ENCODE measurements at regions of chr21 and their contacts with region 1.

Region 1: GRCh38 chr21:42878993-42879787 is at the start of gene WDR4:
- DNase-seq: peak; percentile 99
- H3K4me3 Mint-ChIP-seq: peak within 1 kb of the TSS; percentile 91
- H3K27ac Mint-ChIP-seq: peak within 1 kb of the TSS; percentile 92
- H3K4me1 Mint-ChIP-seq: peaks cover 14% of the 10 kb centered on the region
- H3K27me3 Mint-ChIP-seq: no peaks in the 10 kb centered on the region
- total RNA-seq, gene WDR4: 62.2 and 65.6 TPM in 2 replicates

Region 2: DNA sequence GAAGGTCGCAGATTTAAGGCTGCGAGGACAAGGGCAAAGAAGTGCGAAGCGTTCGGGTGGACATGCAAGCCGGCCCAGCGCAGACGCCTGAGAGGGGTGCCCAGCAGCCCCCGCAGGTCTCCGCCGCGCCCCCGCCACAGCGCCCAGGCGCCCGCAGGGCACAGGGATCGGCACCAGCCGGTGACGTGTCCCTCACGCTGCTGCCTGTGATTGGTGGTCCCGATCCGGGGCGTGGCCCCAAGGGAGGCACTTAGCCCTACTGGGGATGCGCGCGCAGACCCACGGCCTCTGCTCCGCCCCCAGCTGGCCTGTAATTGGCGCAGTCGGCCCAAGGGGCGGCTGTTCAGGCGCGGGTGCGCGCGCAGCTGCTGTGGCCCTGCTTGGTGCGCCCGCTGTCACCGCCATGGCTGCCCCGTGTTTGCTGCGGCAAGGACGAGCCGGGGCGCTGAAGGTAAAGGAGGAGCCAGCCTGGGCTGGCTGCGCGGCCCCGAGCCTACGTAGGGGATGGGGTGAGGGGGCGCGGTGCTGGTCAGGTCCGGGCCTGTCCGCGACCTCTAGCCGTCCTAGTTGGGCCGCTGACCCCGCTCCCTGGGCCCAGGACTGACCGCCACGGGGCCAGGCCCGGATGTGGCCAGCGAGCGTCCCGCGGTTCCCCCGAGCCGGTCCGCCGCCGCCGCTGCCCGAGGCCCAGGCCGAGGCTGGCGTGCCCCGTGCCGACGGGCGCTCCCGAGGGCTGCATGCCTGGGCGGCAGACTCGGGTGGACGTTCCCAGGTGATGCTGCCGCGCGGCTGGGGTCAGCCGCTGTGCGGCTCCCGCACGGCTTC is 14.0 kb after region 1 on chr21 and contains the start of gene NDUFV3:
- intact Hi-C with region 1: loop called (anchors 1 kb)
- DNase-seq: peak; percentile 98
- H3K4me3 Mint-ChIP-seq: peak within 1 kb of the TSS; percentile 85
- H3K27ac Mint-ChIP-seq: peak within 1 kb of the TSS; percentile 95
- H3K4me1 Mint-ChIP-seq: peaks cover 11% of the 10 kb centered on the region
- H3K27me3 Mint-ChIP-seq: no peaks in the 10 kb centered on the region
- total RNA-seq, gene NDUFV3: 39.6 and 45.9 TPM in 2 replicates

Region 3: GRCh38 chr21:42939582-42940410 is 60.6 kb after region 1 on chr21:
- intact Hi-C with region 1: no loop called
- DNase-seq: no peak
- H3K4me3 Mint-ChIP-seq: no peak overlapping the region
- H3K27ac Mint-ChIP-seq: no peak overlapping the region
- H3K4me1 Mint-ChIP-seq: no peaks in the 10 kb centered on the region
- H3K27me3 Mint-ChIP-seq: no peaks in the 10 kb centered on the region

Region 4: DNA sequence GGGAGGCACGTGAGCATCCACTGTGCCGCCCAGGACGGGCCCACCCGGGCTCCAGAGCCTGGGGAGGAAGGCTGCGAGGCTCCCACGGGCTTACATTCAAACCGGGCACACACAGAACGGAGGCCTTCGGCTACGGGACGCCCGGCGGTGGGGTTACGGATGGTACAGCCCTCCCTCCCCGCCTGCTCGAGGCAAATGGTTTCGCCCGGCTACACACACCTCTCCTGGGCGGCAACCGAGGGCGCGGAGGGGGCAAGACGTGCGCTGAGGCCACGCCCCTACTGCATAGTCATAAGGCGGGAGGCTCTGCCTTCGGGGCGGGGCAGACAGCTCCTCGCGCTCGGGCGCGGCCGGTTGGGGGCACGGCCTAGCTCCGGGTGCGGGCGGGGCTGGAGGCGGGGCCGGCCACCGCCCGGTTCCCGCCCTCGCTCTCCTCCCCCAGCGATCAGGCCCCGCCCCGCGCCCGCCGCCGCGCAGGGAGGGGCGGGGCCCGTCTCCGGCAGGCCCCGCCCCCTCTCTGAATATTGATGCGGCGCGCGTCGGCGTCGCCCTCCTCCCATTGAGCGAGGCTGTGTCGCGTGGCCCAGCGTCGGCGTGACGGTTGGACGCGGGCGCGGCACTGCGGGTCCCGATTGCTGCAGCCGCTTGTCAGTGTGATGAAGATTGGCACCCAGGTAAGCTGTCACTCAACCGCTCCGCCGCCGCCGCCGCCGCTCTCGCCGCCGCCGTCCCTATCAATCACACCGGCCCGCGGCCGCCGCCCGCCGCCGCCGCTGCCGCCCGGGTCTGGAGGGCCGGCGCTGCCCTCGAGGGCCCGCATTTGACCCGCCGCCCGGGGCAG is 95.0 kb after region 1 on chr21 and contains the start of gene PKNOX1:
- intact Hi-C with region 1: loop called (anchors 1 kb)
- DNase-seq: peak; percentile 98
- H3K4me3 Mint-ChIP-seq: peak within 1 kb of the TSS; percentile 87
- H3K27ac Mint-ChIP-seq: peak within 1 kb of the TSS; percentile 90
- H3K4me1 Mint-ChIP-seq: peaks cover 25% of the 10 kb centered on the region
- H3K27me3 Mint-ChIP-seq: no peaks in the 10 kb centered on the region
- total RNA-seq, gene PKNOX1: 25.6 and 26.9 TPM in 2 replicates

Measured in activated T-helper 2 cell treated with anti-CD3 and anti-CD28 coated beads, Interferon-gamma antibody, Interleukin-2, Interleukin-4, amounts not matched to agents 10 μg/mL and 5 μg/mL and 100 μg/mL, durations not matched to agents 14 hours and 24 hours and 36 hours (primary cell).